Activated T-helper 1 cell treated with anti-CD3 and anti-CD28 coated beads, Interleukin-12 subunit alpha, Interleukin-12 subunit beta, Interleukin-2, Interleukin-4 antibody, amounts not matched to agents 30 ng/mL and 10 ng/mL and 1 ng/mL, durations not matched to agents 14 hours and 24 hours and 36 hours (primary cell): ENCODE measurements at regions of chr3 and their contacts with region 1.

Region 1: GRCh38 chr3:188683032-188683521 is 488.7 kb upstream of the TPRG1 start:
- DNase-seq: no peak
- H3K4me3 Mint-ChIP-seq: no peak overlapping the region
- H3K27ac Mint-ChIP-seq: peak overlapping the region; percentile 74
- H3K4me1 Mint-ChIP-seq: peaks cover 28% of the 10 kb centered on the region
- H3K27me3 Mint-ChIP-seq: no peaks in the 10 kb centered on the region

Region 2: GRCh38 chr3:188294823-188295487 is 388.1 kb before region 1 on chr3:
- intact Hi-C with region 1: loop called (anchors 1 kb)
- DNase-seq: no peak
- H3K4me3 Mint-ChIP-seq: no peak overlapping the region
- H3K27ac Mint-ChIP-seq: peak overlapping the region; percentile 33
- H3K4me1 Mint-ChIP-seq: peaks cover 86% of the 10 kb centered on the region
- H3K27me3 Mint-ChIP-seq: no peaks in the 10 kb centered on the region

Region 3: GRCh38 chr3:188497021-188497420 is 186.1 kb before region 1 on chr3:
- intact Hi-C with region 1: no loop called
- DNase-seq: no peak
- H3K4me3 Mint-ChIP-seq: no peak overlapping the region
- H3K27ac Mint-ChIP-seq: no peak overlapping the region
- H3K4me1 Mint-ChIP-seq: peaks cover 4% of the 10 kb centered on the region
- H3K27me3 Mint-ChIP-seq: no peaks in the 10 kb centered on the region

Region 4: DNA sequence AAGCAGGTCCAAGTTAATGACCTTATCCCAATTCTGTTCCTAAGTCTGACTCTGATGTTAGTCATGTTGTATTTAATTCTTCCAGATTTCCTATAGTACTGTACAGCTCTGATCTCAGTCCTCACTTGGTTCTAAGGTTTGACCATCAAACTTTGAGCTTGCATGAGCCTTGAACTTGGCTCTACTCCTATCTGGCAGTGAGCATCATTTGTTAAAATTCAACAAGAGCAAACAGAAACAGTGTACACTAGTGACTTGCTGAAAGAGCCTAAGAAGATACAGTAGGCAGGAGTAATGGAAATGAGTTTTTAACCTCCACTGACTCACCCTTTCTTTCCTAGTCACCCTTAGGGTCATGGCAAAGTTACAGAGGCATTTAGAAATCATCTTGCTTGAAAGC is 37.6 kb after region 1 on chr3:
- intact Hi-C with region 1: loop called (anchors 1 kb)
- DNase-seq: no peak
- H3K4me3 Mint-ChIP-seq: no peak overlapping the region
- H3K27ac Mint-ChIP-seq: no peak overlapping the region
- H3K4me1 Mint-ChIP-seq: peaks cover 35% of the 10 kb centered on the region
- H3K27me3 Mint-ChIP-seq: peaks cover 2% of the 10 kb centered on the region